ENCODE measurements at regions of chr13 and their contacts with region 1.

Region 1: GRCh38 chr13:21823949-21824348 is 153.1 kb downstream of the FGF9 start:
- DNase-seq: no peak
- ATAC-seq: no peak
- H3K4me3 ChIP-seq: no peak overlapping the region
- H3K27ac ChIP-seq: no peak overlapping the region
- H3K4me1 ChIP-seq: peaks cover 70% of the 10 kb centered on the region
- H3K27me3 ChIP-seq: peaks cover 0 to 12% of the 10 kb centered on the region in 2 experiments; a peak in 2 of 5 replicates
- CTCF ChIP-seq: no peak
- EP300 ChIP-seq: no peak
- POLR2A ChIP-seq: no peak
- RAD21 ChIP-seq: no peak

Region 2: DNA sequence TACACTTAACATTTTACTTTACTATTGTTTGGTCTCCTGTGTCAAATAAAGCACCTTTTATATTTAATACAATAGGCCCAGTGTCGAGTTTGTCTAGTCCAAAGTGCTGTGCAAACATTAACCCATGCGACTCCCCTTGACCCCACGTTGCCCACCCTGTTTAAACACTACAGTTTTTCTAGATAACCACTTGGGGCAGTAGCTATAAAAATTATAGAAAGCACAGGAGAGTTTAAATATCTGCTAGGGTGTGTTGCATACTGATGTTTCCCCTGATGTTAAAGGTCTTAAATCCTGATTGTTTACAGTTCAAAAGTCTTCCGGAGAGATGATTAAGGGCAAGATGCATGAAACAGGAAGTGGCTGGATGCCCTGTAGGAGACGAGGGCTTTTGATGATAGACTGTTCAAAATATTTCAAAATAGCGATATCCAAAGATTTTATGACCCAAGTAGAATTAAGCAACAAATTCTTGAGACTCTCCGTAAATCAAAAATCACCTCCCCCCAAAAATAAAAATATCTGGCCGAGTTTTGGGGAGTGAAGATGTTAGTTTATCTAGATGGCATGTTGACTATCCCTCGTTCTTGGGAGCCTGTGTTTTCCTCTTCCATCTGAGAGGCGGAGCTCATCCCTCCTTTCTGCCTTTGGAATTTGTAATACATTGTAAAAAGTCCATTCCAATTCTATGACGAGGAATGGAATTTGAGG is 14.0 kb after region 1 on chr13:
- CTCF ChIA-PET with region 1: no interaction called
- POLR2A ChIA-PET with region 1: no interaction called
- in situ Hi-C with region 1: no loop called
- intact Hi-C with region 1: loop called (anchors 2 kb)
- DNase-seq: peak; percentile 96
- ATAC-seq: peak; percentile 92
- H3K4me3 ChIP-seq: peak overlapping the region; percentile 13 to 35 (median 29); a peak in 4 of 6 replicates
- H3K27ac ChIP-seq: peak overlapping the region; percentile 91
- H3K4me1 ChIP-seq: peaks cover 60% of the 10 kb centered on the region
- H3K27me3 ChIP-seq: no peaks in the 10 kb centered on the region
- CTCF ChIP-seq: peak; percentile 47
- EP300 ChIP-seq: peak; percentile 58 to 74; a peak in 2 of 4 replicates
- POLR2A ChIP-seq: no peak
- RAD21 ChIP-seq: no peak

Measured in HepG2 (cell line).